ENCODE measurements at regions of chr2 and their contacts with region 1.

Region 1: GRCh38 chr2:143110758-143111428 is 18.3 kb upstream of the ARHGAP15 start:
- DNase-seq: peak; percentile 84
- ATAC-seq: peak; percentile 86
- H3K4me3 ChIP-seq: no peak overlapping the region
- H3K4me3 Mint-ChIP-seq: no peak overlapping the region
- H3K27ac ChIP-seq: no peak overlapping the region
- H3K27ac Mint-ChIP-seq: peak overlapping the region; percentile 76
- H3K4me1 ChIP-seq: peaks cover 4 to 6% of the 10 kb centered on the region in 2 donors
- H3K4me1 Mint-ChIP-seq: peaks cover 6% of the 10 kb centered on the region
- H3K27me3 ChIP-seq: no peaks in the 10 kb centered on the region
- H3K27me3 Mint-ChIP-seq: no peaks in the 10 kb centered on the region
- CTCF ChIP-seq: peak; percentile 98

Region 2: DNA sequence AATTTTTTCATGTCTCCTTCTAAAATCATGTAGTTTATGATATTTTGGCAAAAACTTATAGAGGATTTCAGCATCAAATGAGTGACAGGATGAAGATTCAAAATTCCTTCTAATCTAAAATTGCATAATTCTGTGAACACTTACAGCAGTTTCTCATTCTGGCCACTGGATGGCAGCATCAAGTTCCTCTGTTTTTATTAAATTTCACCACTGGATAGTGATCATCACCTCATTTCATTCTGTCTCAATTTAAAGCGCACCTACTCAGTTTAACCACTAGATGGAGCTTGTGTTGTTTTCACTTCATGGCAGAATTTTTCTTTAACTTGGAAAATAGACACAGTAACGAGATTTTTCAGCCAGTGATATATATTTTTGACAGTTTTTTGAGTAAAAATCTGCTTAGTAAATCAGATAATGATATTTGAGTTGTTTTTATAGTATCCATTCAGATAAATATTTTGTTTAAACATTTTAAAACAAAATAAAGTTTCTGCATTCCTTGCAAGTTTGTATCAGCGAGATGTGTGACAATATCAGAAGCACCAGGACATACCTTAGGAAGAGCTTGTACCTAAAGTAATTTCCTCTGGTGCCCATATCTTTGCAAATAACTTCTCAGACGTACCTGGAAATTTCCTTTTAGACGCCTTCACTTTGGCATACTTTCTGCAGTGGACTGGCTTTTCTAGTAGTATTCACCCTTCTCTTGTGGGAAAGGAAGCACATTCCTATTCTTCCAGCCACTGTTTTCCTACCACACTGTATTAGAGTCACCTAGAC is 76.4 kb before region 1 on chr2:
- CTCF ChIA-PET with region 1: interaction called, 10 read pairs
- POLR2A ChIA-PET with region 1: no interaction called
- intact Hi-C with region 1: loop called (anchors 1 kb)
- DNase-seq: peak; percentile 85
- ATAC-seq: peak; percentile 97
- H3K4me3 ChIP-seq: no peak overlapping the region
- H3K4me3 Mint-ChIP-seq: no peak overlapping the region
- H3K27ac ChIP-seq: no peak overlapping the region
- H3K27ac Mint-ChIP-seq: no peak overlapping the region
- H3K4me1 ChIP-seq: peaks cover 10 to 11% of the 10 kb centered on the region in 2 donors
- H3K4me1 Mint-ChIP-seq: peaks cover 9% of the 10 kb centered on the region
- H3K27me3 ChIP-seq: no peaks in the 10 kb centered on the region
- H3K27me3 Mint-ChIP-seq: no peaks in the 10 kb centered on the region
- CTCF ChIP-seq: peak; percentile 99

Region 3: GRCh38 chr2:143128681-143129580 is 18.0 kb after region 1 on chr2 and contains the start of gene ARHGAP15:
- CTCF ChIA-PET with region 1: interaction called, 75 read pairs
- POLR2A ChIA-PET with region 1: interaction called, 3 read pairs
- intact Hi-C with region 1: loop called (anchors 1 kb)
- DNase-seq: peak; percentile 90
- ATAC-seq: peak; percentile 92
- H3K4me3 ChIP-seq: peak within 1 kb of the TSS; percentile 44 to 93 (median 57)
- H3K4me3 Mint-ChIP-seq: peak within 1 kb of the TSS; percentile 78
- H3K27ac ChIP-seq: peak within 1 kb of the TSS; percentile 92
- H3K27ac Mint-ChIP-seq: peak within 1 kb of the TSS; percentile 99
- H3K4me1 ChIP-seq: peaks cover 46 to 51% of the 10 kb centered on the region in 2 donors
- H3K4me1 Mint-ChIP-seq: peaks cover 52% of the 10 kb centered on the region
- H3K27me3 ChIP-seq: no peaks in the 10 kb centered on the region
- H3K27me3 Mint-ChIP-seq: no peaks in the 10 kb centered on the region
- CTCF ChIP-seq: no peak
- total RNA-seq, gene ARHGAP15: 187 and 198 TPM in 2 replicates

Region 4: GRCh38 chr2:143169105-143169504 is 58.2 kb after region 1 on chr2:
- CTCF ChIA-PET with region 1: interaction called, 196 read pairs
- POLR2A ChIA-PET with region 1: no interaction called
- intact Hi-C with region 1: no loop called
- DNase-seq: no peak
- ATAC-seq: no peak
- H3K4me3 ChIP-seq: no peak overlapping the region
- H3K4me3 Mint-ChIP-seq: no peak overlapping the region
- H3K27ac ChIP-seq: no peak overlapping the region
- H3K27ac Mint-ChIP-seq: peak overlapping the region; percentile 3
- H3K4me1 ChIP-seq: peaks cover 6 to 7% of the 10 kb centered on the region in 2 donors
- H3K4me1 Mint-ChIP-seq: peaks cover 53% of the 10 kb centered on the region
- H3K27me3 ChIP-seq: no peaks in the 10 kb centered on the region
- H3K27me3 Mint-ChIP-seq: no peaks in the 10 kb centered on the region
- CTCF ChIP-seq: no peak

Region 5: GRCh38 chr2:143193121-143193520 is 82.2 kb after region 1 on chr2:
- CTCF ChIA-PET with region 1: interaction called, 10 read pairs
- POLR2A ChIA-PET with region 1: no interaction called
- intact Hi-C with region 1: no loop called
- DNase-seq: no peak
- ATAC-seq: no peak
- H3K4me3 ChIP-seq: no peak overlapping the region
- H3K4me3 Mint-ChIP-seq: no peak overlapping the region
- H3K27ac ChIP-seq: no peak overlapping the region
- H3K27ac Mint-ChIP-seq: no peak overlapping the region
- H3K4me1 ChIP-seq: no peaks in the 10 kb centered on the region
- H3K4me1 Mint-ChIP-seq: peaks cover 23% of the 10 kb centered on the region
- H3K27me3 ChIP-seq: no peaks in the 10 kb centered on the region
- H3K27me3 Mint-ChIP-seq: no peaks in the 10 kb centered on the region
- CTCF ChIP-seq: no peak

Region 6: DNA sequence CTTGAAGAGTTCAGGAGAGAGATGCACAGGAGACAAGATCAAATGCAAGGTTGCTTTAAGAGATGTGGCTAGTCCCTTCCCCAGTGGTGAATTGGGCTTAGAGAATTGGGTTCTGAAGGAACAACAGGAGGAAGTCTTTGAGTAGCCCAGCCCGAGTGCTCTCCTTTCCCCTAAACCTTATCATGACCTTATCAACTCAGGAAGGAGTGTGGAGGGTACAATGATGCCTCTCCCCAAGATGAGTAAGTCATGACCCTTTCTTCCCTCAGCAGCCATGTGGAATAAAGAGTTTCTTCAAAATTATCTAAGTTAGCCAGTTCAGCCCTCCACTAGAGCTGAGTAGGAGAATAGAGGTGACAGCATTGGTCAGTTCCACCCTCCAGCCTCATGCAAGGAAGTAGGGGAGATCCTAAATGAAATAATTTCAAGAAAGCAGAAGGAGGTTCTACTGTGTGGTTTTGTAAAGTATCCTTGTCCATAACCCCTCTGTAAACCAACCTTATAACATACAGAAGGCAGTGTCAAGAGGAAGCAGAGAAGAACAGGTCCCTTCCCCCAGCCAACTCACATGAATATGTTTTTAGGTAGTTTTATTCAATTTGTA is 106.7 kb after region 1 on chr2:
- CTCF ChIA-PET with region 1: interaction called, 258 read pairs
- POLR2A ChIA-PET with region 1: interaction called, 3 read pairs
- intact Hi-C with region 1: loop called (anchors 1 kb)
- DNase-seq: no peak
- ATAC-seq: peak; percentile 17
- H3K4me3 ChIP-seq: no peak overlapping the region
- H3K4me3 Mint-ChIP-seq: no peak overlapping the region
- H3K27ac ChIP-seq: peak overlapping the region in 1 of 2 donors; percentile 57
- H3K27ac Mint-ChIP-seq: peak overlapping the region; percentile 84
- H3K4me1 ChIP-seq: no peaks in the 10 kb centered on the region
- H3K4me1 Mint-ChIP-seq: peaks cover 16% of the 10 kb centered on the region
- H3K27me3 ChIP-seq: no peaks in the 10 kb centered on the region
- H3K27me3 Mint-ChIP-seq: no peaks in the 10 kb centered on the region
- CTCF ChIP-seq: no peak

Region 7: GRCh38 chr2:143284087-143284675 is 173.3 kb after region 1 on chr2:
- CTCF ChIA-PET with region 1: interaction called, 13 read pairs
- POLR2A ChIA-PET with region 1: no interaction called
- intact Hi-C with region 1: loop called (anchors 1 kb)
- DNase-seq: peak; percentile 62
- ATAC-seq: peak; percentile 80
- H3K4me3 ChIP-seq: no peak overlapping the region
- H3K4me3 Mint-ChIP-seq: no peak overlapping the region
- H3K27ac ChIP-seq: no peak overlapping the region
- H3K27ac Mint-ChIP-seq: no peak overlapping the region
- H3K4me1 ChIP-seq: no peaks in the 10 kb centered on the region
- H3K4me1 Mint-ChIP-seq: peaks cover 16% of the 10 kb centered on the region
- H3K27me3 ChIP-seq: no peaks in the 10 kb centered on the region
- H3K27me3 Mint-ChIP-seq: no peaks in the 10 kb centered on the region
- CTCF ChIP-seq: peak; percentile 93

Measured in B cell (primary cell).